HepG2 (cell line): ENCODE measurements at regions of chr5 and their contacts with region 1.

Region 1: GRCh38 chr5:167723254-167723871 is 568.1 kb upstream of the WWC1 start:
- DNase-seq: peak; percentile 55
- ATAC-seq: peak; percentile 96
- H3K4me3 ChIP-seq: no peak overlapping the region
- H3K27ac ChIP-seq: no peak overlapping the region
- H3K4me1 ChIP-seq: no peaks in the 10 kb centered on the region
- H3K27me3 ChIP-seq: no peaks in the 10 kb centered on the region
- CTCF ChIP-seq: peak; percentile 85
- EP300 ChIP-seq: no peak
- POLR2A ChIP-seq: no peak
- RAD21 ChIP-seq: 0 out of 2 replicates have a peak, but pooled peaks have one; percentile 25

Region 2: DNA sequence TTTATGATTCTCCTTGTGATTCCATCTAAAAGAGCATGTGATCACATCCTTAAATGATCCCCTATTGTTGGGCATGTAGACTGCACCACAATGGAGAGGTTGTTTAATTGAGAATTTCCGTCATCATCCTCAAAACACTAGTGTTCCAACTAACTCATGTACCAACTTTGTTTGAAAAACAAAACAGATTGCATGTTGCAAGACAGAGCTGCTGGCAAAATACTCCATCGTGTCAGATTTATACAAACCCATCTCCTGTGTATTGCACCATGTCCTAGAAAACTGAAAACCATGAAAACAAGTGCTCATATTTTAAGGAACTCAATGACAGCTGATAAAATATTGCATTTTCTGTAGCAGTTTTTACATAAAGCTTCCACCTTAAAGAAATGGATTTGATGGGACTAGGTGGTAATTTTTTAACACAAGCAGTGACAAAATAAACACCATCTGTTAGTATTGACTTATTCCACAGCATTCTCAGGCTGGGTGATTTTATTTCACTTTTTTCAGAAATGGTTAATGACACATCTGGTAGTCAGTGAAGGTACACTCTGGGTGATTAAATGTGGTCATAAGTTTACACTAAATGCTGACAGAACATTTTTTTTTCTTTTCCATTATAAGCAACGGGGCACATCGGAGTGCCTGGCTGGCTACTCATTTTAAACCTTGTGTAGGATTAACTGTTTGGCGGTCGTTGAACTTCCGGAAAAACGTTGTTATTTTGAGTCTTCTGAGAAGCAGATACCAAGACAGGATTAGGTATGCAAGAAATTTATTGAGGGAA is 34.8 kb before region 1 on chr5:
- CTCF ChIA-PET with region 1: no interaction called
- POLR2A ChIA-PET with region 1: no interaction called
- in situ Hi-C with region 1: no loop called
- intact Hi-C with region 1: no loop called
- DNase-seq: no peak
- ATAC-seq: no peak
- H3K4me3 ChIP-seq: no peak overlapping the region
- H3K27ac ChIP-seq: no peak overlapping the region
- H3K4me1 ChIP-seq: no peaks in the 10 kb centered on the region
- H3K27me3 ChIP-seq: no peaks in the 10 kb centered on the region; a peak in 1 of 5 replicates
- CTCF ChIP-seq: no peak
- EP300 ChIP-seq: no peak
- POLR2A ChIP-seq: no peak
- RAD21 ChIP-seq: no peak

Region 3: GRCh38 chr5:168020542-168021294 is 297.4 kb after region 1 on chr5:
- CTCF ChIA-PET with region 1: no interaction called
- POLR2A ChIA-PET with region 1: no interaction called
- in situ Hi-C with region 1: loop called (anchors 10 kb)
- intact Hi-C with region 1: loop called (anchors 1 kb)
- DNase-seq: no peak
- ATAC-seq: no peak
- H3K4me3 ChIP-seq: no peak overlapping the region
- H3K27ac ChIP-seq: no peak overlapping the region
- H3K4me1 ChIP-seq: no peaks in the 10 kb centered on the region
- H3K27me3 ChIP-seq: peaks cover 0 to 28% of the 10 kb centered on the region in 2 experiments; a peak in 3 of 5 replicates
- CTCF ChIP-seq: 0 out of 2 replicates have a peak, but pooled peaks have one; percentile 14
- EP300 ChIP-seq: no peak
- POLR2A ChIP-seq: no peak
- RAD21 ChIP-seq: no peak

Region 4: GRCh38 chr5:168047043-168047668 is 323.8 kb after region 1 on chr5:
- CTCF ChIA-PET with region 1: interaction called, 20 read pairs
- POLR2A ChIA-PET with region 1: no interaction called
- in situ Hi-C with region 1: loop called (anchors 5 kb)
- intact Hi-C with region 1: loop called (anchors 1 kb)
- DNase-seq: peak; percentile 43
- ATAC-seq: peak; percentile 92
- H3K4me3 ChIP-seq: no peak overlapping the region
- H3K27ac ChIP-seq: no peak overlapping the region
- H3K4me1 ChIP-seq: no peaks in the 10 kb centered on the region
- H3K27me3 ChIP-seq: peaks cover 0 to 2% of the 10 kb centered on the region in 2 experiments; a peak in 1 of 5 replicates
- CTCF ChIP-seq: peak; percentile 76
- EP300 ChIP-seq: no peak
- POLR2A ChIP-seq: no peak
- RAD21 ChIP-seq: peak; percentile 61

Region 5: DNA sequence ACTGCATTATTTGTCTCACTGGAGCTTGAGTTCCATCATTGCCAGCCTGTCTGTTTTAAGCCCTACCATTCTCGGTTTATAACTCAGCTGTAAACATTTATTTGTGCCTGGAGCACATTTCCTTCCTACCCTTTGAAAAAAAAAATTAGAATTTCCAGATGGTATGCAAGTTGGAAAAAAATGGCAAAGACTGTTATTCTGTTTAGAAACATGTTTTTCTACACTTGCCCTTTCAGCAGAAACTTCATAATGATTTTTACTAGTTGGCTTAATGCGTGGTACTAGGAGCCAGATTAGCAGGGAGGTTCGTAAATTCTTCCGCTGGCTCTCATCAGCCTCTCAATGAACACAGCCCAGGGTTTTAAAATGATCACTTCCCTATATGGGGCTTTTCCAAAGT is 329.3 kb after region 1 on chr5:
- CTCF ChIA-PET with region 1: interaction called, 20 read pairs
- POLR2A ChIA-PET with region 1: no interaction called
- in situ Hi-C with region 1: loop called (anchors 5 kb)
- intact Hi-C with region 1: loop called (anchors 1 kb)
- DNase-seq: no peak
- ATAC-seq: no peak
- H3K4me3 ChIP-seq: no peak overlapping the region
- H3K27ac ChIP-seq: no peak overlapping the region
- H3K4me1 ChIP-seq: no peaks in the 10 kb centered on the region
- H3K27me3 ChIP-seq: no peaks in the 10 kb centered on the region
- CTCF ChIP-seq: no peak
- EP300 ChIP-seq: no peak
- POLR2A ChIP-seq: no peak
- RAD21 ChIP-seq: no peak

Region 6: GRCh38 chr5:168219515-168220410 is 496.4 kb after region 1 on chr5:
- CTCF ChIA-PET with region 1: interaction called, 8 read pairs
- POLR2A ChIA-PET with region 1: no interaction called
- in situ Hi-C with region 1: loop called (anchors 10 kb)
- intact Hi-C with region 1: no loop called
- DNase-seq: peak; percentile 60
- ATAC-seq: peak; percentile 84
- H3K4me3 ChIP-seq: no peak overlapping the region
- H3K27ac ChIP-seq: no peak overlapping the region
- H3K4me1 ChIP-seq: no peaks in the 10 kb centered on the region
- H3K27me3 ChIP-seq: peaks cover 2 to 9% of the 10 kb centered on the region in 2 experiments; a peak in 2 of 5 replicates
- CTCF ChIP-seq: peak; percentile 84
- EP300 ChIP-seq: no peak
- POLR2A ChIP-seq: no peak
- RAD21 ChIP-seq: peak; percentile 54; the same call in 1 of the 2 replicates